Transverse colon (tissue), 4 donors: ENCODE measurements at regions of chr1 and their contacts with region 1.

Region 1: GRCh38 chr1:36420836-36421664 is 23.3 kb upstream of the LSM10 start:
- DNase-seq: peak; percentile 93
- H3K4me3 ChIP-seq: no peak overlapping the region
- H3K27ac ChIP-seq: peak overlapping the region in 3 of 4 donors; percentile 10 to 50 (median 15)
- H3K4me1 ChIP-seq: peaks cover 0 to 9% (median 3%) of the 10 kb centered on the region in 4 donors
- H3K27me3 ChIP-seq: no peaks in the 10 kb centered on the region
- CTCF ChIP-seq: peak; percentile 91 to 95 (median 92)
- EP300 ChIP-seq: no peak
- POLR2A ChIP-seq: no peak

Region 2: DNA sequence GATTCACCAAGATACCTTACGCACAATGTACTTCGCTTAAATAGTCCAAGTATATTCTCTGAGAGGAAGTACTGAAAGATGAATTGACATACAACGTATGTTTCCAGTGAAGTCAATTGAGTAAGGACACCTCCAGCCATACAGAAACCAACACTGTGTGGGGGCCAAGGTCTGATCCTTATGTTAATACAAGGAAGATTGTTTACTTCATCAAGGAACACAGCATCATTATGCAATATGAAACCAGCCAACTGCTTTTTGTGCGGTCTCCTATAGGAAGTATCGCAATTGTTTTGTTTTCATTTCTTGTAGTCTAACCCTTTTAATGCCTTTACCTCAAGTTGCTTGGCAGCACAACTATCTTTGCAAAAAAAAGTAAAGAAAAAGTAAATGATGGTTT is 365.3 kb before region 1 on chr1:
- in situ Hi-C with region 1: no loop called
- intact Hi-C with region 1: no loop called
- DNase-seq: no peak
- H3K4me3 ChIP-seq: no peak overlapping the region
- H3K27ac ChIP-seq: no peak overlapping the region
- H3K4me1 ChIP-seq: no peaks in the 10 kb centered on the region
- H3K27me3 ChIP-seq: no peaks in the 10 kb centered on the region
- CTCF ChIP-seq: no peak
- EP300 ChIP-seq: no peak
- POLR2A ChIP-seq: no peak

Region 3: DNA sequence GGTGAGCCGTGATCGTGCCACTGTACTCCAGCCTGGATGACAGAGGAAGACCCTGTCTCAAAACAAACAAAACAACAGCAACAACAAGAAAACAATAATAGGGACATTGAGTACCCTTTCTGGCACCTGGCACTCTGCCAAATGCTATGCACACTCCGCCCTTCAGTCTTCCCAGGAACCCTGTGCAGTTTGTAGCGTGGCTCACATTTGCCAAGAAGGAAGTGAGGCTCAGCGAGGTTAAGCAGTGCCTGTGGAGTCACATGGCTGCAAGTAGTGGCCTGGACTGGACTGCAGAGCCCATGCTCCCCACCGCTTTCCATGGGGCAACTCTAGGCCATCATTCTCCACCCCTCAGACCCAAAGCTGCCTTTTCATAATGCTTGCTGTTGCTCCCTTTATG is 92.3 kb before region 1 on chr1:
- in situ Hi-C with region 1: loop called in 1 of 4 experiments (anchors 5 kb)
- intact Hi-C with region 1: no loop called
- DNase-seq: peak; percentile 37
- H3K4me3 ChIP-seq: no peak overlapping the region
- H3K27ac ChIP-seq: no peak overlapping the region
- H3K4me1 ChIP-seq: peaks cover 5 to 17% (median 13%) of the 10 kb centered on the region in 4 donors
- H3K27me3 ChIP-seq: peaks cover 14% of the 10 kb centered on the region
- CTCF ChIP-seq: no peak
- EP300 ChIP-seq: no peak
- POLR2A ChIP-seq: no peak

Region 4: GRCh38 chr1:36342481-36343478 is 78.3 kb before region 1 on chr1:
- in situ Hi-C with region 1: loop called in 2 of 4 experiments (anchors 5 kb)
- intact Hi-C with region 1: loop called (anchors 2 kb)
- DNase-seq: peak; percentile 65
- H3K4me3 ChIP-seq: no peak overlapping the region
- H3K27ac ChIP-seq: peak overlapping the region in 2 of 4 donors; percentile 9 to 33
- H3K4me1 ChIP-seq: peaks cover 0 to 2% (median 0%) of the 10 kb centered on the region in 4 donors
- H3K27me3 ChIP-seq: no peaks in the 10 kb centered on the region
- CTCF ChIP-seq: peak; percentile 60 to 78 (median 73)
- EP300 ChIP-seq: no peak
- POLR2A ChIP-seq: no peak

Region 5: GRCh38 chr1:36609241-36610027 is 188.4 kb after region 1 on chr1:
- in situ Hi-C with region 1: no loop called
- intact Hi-C with region 1: no loop called
- DNase-seq: peak; percentile 40
- H3K4me3 ChIP-seq: no peak overlapping the region
- H3K27ac ChIP-seq: no peak overlapping the region
- H3K4me1 ChIP-seq: no peaks in the 10 kb centered on the region
- H3K27me3 ChIP-seq: no peaks in the 10 kb centered on the region
- CTCF ChIP-seq: peak; percentile 29 to 59 (median 39)
- EP300 ChIP-seq: no peak
- POLR2A ChIP-seq: no peak

Region 6: GRCh38 chr1:36705629-36706028 is 284.6 kb after region 1 on chr1:
- in situ Hi-C with region 1: no loop called
- intact Hi-C with region 1: no loop called
- DNase-seq: no peak
- H3K4me3 ChIP-seq: no peak overlapping the region
- H3K27ac ChIP-seq: no peak overlapping the region
- H3K4me1 ChIP-seq: no peaks in the 10 kb centered on the region
- H3K27me3 ChIP-seq: peaks cover 36% of the 10 kb centered on the region
- CTCF ChIP-seq: no peak
- EP300 ChIP-seq: no peak
- POLR2A ChIP-seq: no peak